Activated naive CD4-positive, alpha-beta T cell treated with anti-CD3 and anti-CD28 coated beads, Interleukin-2, amount 10 ng/mL, durations not matched to agents 7 days and 5 days (primary cell): ENCODE measurements at regions of chr9 and their contacts with region 1.

Region 1: GRCh38 chr9:4923580-4924544 is 61.2 kb upstream of the JAK2 start:
- DNase-seq: peak; percentile 39
- H3K4me3 Mint-ChIP-seq: no peak overlapping the region
- H3K27ac Mint-ChIP-seq: no peak overlapping the region
- H3K4me1 Mint-ChIP-seq: peaks cover 31% of the 10 kb centered on the region
- H3K27me3 Mint-ChIP-seq: no peaks in the 10 kb centered on the region

Region 2: DNA sequence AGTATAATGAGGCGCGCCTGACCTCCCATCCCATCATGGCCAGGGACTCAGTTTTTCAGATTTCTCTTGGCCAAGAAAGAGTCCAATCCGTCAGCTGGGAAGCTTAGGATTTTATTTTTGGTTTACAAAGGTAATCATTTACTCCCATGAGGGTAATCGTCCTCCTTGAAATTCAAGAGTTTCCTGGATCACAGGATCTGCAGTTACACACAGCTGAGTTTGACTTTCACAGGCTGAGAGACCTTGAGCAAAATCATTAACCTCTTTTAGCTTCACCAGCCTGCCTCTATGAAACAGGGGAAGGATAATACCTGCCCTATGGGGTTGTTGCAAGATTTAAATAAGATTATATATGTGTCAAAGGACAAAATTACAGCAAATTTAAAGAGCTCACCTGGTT is 167.4 kb before region 1 on chr9:
- CTCF ChIA-PET with region 1: interaction called, 68 read pairs
- DNase-seq: no peak
- H3K4me3 Mint-ChIP-seq: no peak overlapping the region
- H3K27ac Mint-ChIP-seq: no peak overlapping the region
- H3K4me1 Mint-ChIP-seq: peaks cover 3% of the 10 kb centered on the region
- H3K27me3 Mint-ChIP-seq: peaks cover 45% of the 10 kb centered on the region

Region 3: DNA sequence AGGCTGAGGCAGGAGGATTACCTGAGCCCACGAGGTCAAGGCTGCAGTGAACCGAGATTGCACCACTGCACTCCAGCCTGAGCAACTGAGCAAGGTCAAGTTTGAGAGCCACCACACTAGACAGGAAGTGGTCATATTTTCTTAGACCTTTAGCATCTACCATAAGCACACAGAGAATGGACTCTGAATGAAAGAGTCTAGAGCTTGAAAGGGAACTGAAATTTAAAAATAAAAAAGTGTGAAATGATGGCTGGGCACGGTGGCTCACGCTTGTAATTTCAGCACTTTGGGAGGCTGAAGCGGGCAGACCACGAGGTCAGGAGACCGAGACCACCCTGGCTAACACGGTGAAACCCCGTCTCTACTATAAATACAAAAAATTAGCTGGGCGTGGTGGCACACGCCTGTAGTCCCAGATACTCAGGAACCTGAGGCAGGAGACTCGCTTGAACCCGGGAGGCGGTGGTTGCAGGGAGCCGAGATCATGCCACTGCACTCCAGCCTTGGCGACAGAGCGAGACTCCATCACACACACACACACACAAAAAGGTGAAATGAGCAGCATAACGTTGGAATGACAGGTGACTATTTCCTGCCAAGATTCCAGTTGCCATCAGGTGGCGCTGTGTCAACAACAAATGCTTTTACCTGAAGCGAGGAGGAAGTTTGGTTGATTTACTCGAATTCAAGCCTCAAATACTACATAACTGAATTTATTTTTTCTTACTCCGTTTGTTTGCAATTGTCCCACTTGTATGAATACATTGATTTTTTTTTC is 161.6 kb before region 1 on chr9:
- CTCF ChIA-PET with region 1: interaction called, 68 read pairs
- DNase-seq: peak; percentile 91
- H3K4me3 Mint-ChIP-seq: peak overlapping the region; percentile 34
- H3K27ac Mint-ChIP-seq: peak overlapping the region; percentile 6
- H3K4me1 Mint-ChIP-seq: peaks cover 22% of the 10 kb centered on the region
- H3K27me3 Mint-ChIP-seq: peaks cover 34% of the 10 kb centered on the region

Region 4: DNA sequence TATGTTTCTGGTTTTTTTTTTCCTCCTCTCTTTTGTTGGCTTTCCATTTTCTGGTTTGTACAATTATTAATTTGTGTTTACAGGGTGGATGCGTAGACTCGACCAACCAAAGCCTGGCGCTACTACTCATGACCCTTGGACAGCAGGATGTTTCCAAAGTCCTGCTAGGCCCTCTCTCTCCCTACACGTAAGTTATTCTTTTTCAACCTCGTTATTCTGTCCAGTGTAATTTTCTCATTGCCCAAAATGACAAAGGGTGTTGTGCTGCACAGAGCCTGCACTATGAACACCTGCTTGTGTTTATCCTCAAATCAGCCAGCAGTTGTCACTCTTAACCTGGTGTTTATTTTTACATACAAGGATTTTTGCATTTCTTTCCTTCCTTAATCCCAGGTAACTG is 74.5 kb before region 1 on chr9:
- CTCF ChIA-PET with region 1: interaction called, 10 read pairs
- DNase-seq: no peak
- H3K4me3 Mint-ChIP-seq: no peak overlapping the region
- H3K27ac Mint-ChIP-seq: no peak overlapping the region
- H3K4me1 Mint-ChIP-seq: peaks cover 10% of the 10 kb centered on the region
- H3K27me3 Mint-ChIP-seq: no peaks in the 10 kb centered on the region

Region 5: GRCh38 chr9:4873066-4873465 is 50.8 kb before region 1 on chr9:
- CTCF ChIA-PET with region 1: no interaction called
- DNase-seq: no peak
- H3K4me3 Mint-ChIP-seq: no peak overlapping the region
- H3K27ac Mint-ChIP-seq: no peak overlapping the region
- H3K4me1 Mint-ChIP-seq: no peaks in the 10 kb centered on the region
- H3K27me3 Mint-ChIP-seq: no peaks in the 10 kb centered on the region

Region 6: DNA sequence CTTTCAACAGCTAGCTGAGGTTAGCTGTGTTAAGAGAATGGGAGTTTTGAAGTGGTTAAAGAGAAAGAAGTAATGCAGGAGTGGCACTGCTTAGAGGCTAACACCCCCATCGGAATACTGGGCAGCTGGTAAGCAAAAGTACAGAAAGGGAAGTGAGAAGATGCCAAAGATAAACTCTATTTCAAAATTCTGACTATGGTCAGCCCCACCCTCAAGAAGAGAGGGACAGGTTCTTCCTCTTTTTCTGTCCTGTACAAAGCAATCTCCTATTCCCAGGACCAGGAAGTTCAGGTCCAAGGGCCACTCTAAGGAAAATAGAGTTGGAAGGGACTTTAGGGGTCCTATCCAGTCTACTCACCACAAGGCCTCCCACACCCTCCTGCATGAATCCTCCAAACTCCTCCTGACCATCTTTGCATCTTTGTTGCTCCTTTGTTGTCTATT is 15.3 kb after region 1 on chr9:
- CTCF ChIA-PET with region 1: interaction called, 21 read pairs
- DNase-seq: peak; percentile 56
- H3K4me3 Mint-ChIP-seq: peak overlapping the region; percentile 19
- H3K27ac Mint-ChIP-seq: peak overlapping the region; percentile 82
- H3K4me1 Mint-ChIP-seq: peaks cover 91% of the 10 kb centered on the region
- H3K27me3 Mint-ChIP-seq: no peaks in the 10 kb centered on the region

Region 7: GRCh38 chr9:4987961-4988421 is 64.1 kb after region 1 on chr9:
- CTCF ChIA-PET with region 1: interaction called, 17 read pairs
- DNase-seq: peak; percentile 67
- H3K4me3 Mint-ChIP-seq: no peak overlapping the region
- H3K27ac Mint-ChIP-seq: no peak overlapping the region
- H3K4me1 Mint-ChIP-seq: peaks cover 38% of the 10 kb centered on the region
- H3K27me3 Mint-ChIP-seq: no peaks in the 10 kb centered on the region